Right ventricle myocardium superior (tissue), 1 donor: ENCODE measurements at regions of chr11 and their contacts with region 1.

Region 1: GRCh38 chr11:36746886-36747710 is 149.1 kb upstream of the RAG2 start:
- DNase-seq: peak; percentile 88
- ATAC-seq: peak; percentile 98

Region 2: DNA sequence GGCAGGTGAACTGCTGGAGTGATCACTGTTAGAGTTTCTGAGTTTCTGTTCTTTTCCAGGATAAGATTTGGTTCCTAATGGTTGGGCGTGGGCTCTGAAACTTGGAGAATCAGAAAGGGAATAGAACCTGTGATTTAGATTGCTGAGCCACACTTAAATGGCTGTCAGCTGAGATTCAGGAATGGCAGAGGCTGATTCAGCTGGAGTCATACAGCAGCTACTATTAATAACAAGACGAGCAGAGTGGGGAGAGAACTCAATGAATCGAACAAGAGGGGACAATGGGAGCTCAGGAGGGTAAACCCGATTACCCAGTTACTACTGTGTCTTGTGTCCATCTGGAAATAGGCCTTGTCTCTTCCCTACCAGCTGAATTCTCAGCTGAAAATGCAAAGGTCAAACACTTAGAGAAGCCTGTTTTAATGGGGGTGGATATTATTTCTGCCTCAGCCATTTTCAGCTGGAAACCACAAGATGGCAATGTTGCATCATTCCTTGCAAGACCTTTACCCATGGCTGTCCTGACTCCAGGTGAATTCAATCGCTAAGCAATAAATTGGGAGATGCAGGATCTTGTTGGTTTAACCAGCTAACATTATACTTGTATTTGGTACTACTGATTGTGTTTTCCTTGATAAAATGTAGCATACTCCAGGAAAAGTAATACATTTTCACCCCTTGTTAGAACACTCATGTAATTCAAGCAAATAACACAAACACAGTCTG is 44.6 kb before region 1 on chr11:
- intact Hi-C with region 1: loop called (anchors 2 kb)
- DNase-seq: no peak
- ATAC-seq: peak; percentile 98

Region 3: GRCh38 chr11:36899800-36900199 is 152.7 kb after region 1 on chr11:
- intact Hi-C with region 1: no loop called
- DNase-seq: no peak
- ATAC-seq: no peak

Region 4: GRCh38 chr11:36929401-36929800 is 182.3 kb after region 1 on chr11:
- intact Hi-C with region 1: no loop called
- DNase-seq: no peak
- ATAC-seq: no peak